Naive thymus-derived CD4-positive, alpha-beta T cell (primary cell): ENCODE measurements at regions of chr2 and their contacts with region 1.

Region 1: DNA sequence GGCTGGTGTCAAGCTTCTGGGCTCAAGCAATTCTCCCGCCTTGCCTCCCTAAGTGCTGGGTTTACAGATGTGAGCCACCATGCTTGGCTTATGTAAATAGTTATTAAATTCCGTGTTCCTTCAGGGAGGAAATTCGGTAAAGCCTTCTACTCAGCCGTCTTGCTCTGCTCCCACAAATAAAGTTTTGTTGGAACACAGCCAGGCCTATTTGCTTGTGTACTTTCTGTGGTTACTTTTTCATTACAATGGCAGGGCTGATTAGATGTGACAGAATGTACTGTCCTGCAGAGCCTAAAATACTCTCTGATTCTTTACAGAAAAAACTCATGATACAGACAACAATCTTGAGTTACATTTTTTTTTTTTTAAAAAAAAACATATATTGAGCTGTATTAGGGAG is 68.8 kb upstream of the TACR1 start:
- DNase-seq: no peak
- ATAC-seq: no peak
- H3K4me3 ChIP-seq: no peak overlapping the region
- H3K4me3 Mint-ChIP-seq: no peak overlapping the region
- H3K27ac ChIP-seq: no peak overlapping the region
- H3K27ac Mint-ChIP-seq: no peak overlapping the region
- H3K4me1 ChIP-seq: no peaks in the 10 kb centered on the region
- H3K4me1 Mint-ChIP-seq: no peaks in the 10 kb centered on the region
- H3K27me3 ChIP-seq: no peaks in the 10 kb centered on the region
- H3K27me3 Mint-ChIP-seq: peaks cover 0 to 9% (median 0%) of the 10 kb centered on the region in 5 donors

Region 2: DNA sequence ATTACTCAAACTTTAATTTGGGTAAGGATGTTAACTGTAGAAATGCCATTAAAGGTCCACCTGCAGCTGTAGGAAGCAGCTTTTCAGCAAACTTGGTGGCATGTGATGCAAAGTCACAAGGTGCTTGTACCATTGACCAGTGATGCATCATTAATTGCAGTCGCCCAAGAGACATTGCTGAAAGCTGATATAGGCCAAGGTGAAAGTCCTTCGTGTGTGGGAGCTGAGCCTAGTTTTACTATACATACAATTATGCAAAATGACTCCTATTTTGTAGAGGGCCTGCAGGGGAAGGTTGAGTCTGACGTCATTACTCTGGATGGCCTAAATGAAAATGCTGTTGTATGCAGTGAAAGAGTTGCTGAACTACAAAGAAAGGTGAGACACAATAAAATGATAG is 1841.9 kb before region 1 on chr2:
- CTCF ChIA-PET with region 1: no interaction called
- POLR2A ChIA-PET with region 1: no interaction called
- intact Hi-C with region 1: no loop called
- DNase-seq: no peak
- ATAC-seq: no peak
- H3K4me3 ChIP-seq: no peak overlapping the region
- H3K4me3 Mint-ChIP-seq: no peak overlapping the region
- H3K27ac ChIP-seq: no peak overlapping the region
- H3K27ac Mint-ChIP-seq: no peak overlapping the region
- H3K4me1 ChIP-seq: no peaks in the 10 kb centered on the region
- H3K4me1 Mint-ChIP-seq: no peaks in the 10 kb centered on the region
- H3K27me3 ChIP-seq: no peaks in the 10 kb centered on the region
- H3K27me3 Mint-ChIP-seq: no peaks in the 10 kb centered on the region

Region 3: DNA sequence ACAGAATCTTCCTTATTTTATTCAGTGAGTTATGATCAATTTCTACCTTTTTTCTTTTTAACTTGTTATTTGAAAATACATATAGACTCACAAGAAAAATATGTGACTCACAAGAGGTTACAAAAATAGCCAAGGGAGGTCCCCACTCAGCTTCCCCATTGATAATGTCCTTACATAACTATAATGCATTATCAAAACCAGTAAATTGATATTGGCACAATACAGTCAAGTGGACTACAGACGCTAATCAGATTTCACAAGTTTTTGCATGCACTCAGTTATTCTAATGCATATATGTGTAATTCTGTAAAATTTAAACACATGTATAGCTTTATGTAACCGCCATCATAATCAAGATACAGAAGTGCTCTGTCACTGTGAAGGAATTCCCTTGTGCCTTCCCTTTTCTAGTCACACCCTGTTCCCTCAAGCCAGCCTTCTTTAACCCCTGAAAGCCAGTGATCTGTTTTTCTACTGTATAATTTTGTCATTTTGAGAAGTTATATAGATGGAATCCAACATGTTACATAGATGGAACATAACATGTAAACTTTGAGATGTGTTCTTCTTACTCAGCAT is 1764.0 kb before region 1 on chr2:
- CTCF ChIA-PET with region 1: no interaction called
- POLR2A ChIA-PET with region 1: no interaction called
- intact Hi-C with region 1: loop called in 1 of 2 experiments (anchors 10 kb)
- DNase-seq: no peak
- ATAC-seq: no peak
- H3K4me3 ChIP-seq: no peak overlapping the region
- H3K4me3 Mint-ChIP-seq: no peak overlapping the region
- H3K27ac ChIP-seq: no peak overlapping the region
- H3K27ac Mint-ChIP-seq: no peak overlapping the region
- H3K4me1 ChIP-seq: no peaks in the 10 kb centered on the region
- H3K4me1 Mint-ChIP-seq: peaks cover 0 to 5% (median 3%) of the 10 kb centered on the region in 7 donors
- H3K27me3 ChIP-seq: no peaks in the 10 kb centered on the region
- H3K27me3 Mint-ChIP-seq: no peaks in the 10 kb centered on the region

Region 4: DNA sequence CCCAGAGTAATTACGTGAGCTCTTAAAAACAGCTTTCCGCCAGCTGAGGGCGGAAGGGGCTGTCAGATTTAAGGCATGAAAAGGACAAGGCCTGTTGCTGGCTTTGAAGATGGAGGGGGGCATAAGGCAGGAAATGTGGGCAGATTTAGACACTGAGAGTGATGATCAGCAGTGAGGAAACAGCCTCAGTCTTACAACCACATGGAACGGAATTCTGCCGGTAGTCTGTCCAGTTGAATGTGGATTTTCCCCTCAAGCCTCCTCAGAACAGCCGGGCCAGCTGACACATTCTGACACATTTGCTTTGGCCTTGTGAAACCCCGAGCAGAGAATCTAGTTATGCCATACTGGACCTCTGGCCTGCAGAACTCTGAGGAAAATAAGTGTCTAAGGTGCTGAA is 293.1 kb before region 1 on chr2:
- CTCF ChIA-PET with region 1: no interaction called
- POLR2A ChIA-PET with region 1: no interaction called
- intact Hi-C with region 1: no loop called
- DNase-seq: no peak
- ATAC-seq: no peak
- H3K4me3 ChIP-seq: no peak overlapping the region
- H3K4me3 Mint-ChIP-seq: no peak overlapping the region
- H3K27ac ChIP-seq: no peak overlapping the region
- H3K27ac Mint-ChIP-seq: no peak overlapping the region
- H3K4me1 ChIP-seq: no peaks in the 10 kb centered on the region
- H3K4me1 Mint-ChIP-seq: peaks cover 0 to 13% (median 8%) of the 10 kb centered on the region in 7 donors
- H3K27me3 ChIP-seq: no peaks in the 10 kb centered on the region
- H3K27me3 Mint-ChIP-seq: no peaks in the 10 kb centered on the region